ENCODE measurements at regions of chr9 and their contacts with region 1.

Region 1: GRCh38 chr9:19174127-19174912 is 47.0 kb upstream of the PLIN2 start:
- DNase-seq: no peak
- H3K4me3 ChIP-seq: no peak overlapping the region
- H3K27ac ChIP-seq: no peak overlapping the region
- H3K4me1 ChIP-seq: peaks cover 8 to 12% (median 10%) of the 10 kb centered on the region in 4 donors
- H3K27me3 ChIP-seq: no peaks in the 10 kb centered on the region
- CTCF ChIP-seq: peak; percentile 51 to 61 (median 56)
- EP300 ChIP-seq: no peak
- POLR2A ChIP-seq: no peak

Region 2: GRCh38 chr9:19048966-19049916 is 125.1 kb before region 1 on chr9 and contains the start of gene RRAGA:
- intact Hi-C with region 1: loop called (anchors 5 kb)
- DNase-seq: peak; percentile 98
- H3K4me3 ChIP-seq: peak within 1 kb of the TSS; percentile 76 to 95 (median 86)
- H3K27ac ChIP-seq: peak within 1 kb of the TSS; percentile 92 to 99 (median 96)
- H3K4me1 ChIP-seq: peaks cover 23 to 46% (median 41%) of the 10 kb centered on the region in 4 donors
- H3K27me3 ChIP-seq: no peaks in the 10 kb centered on the region
- CTCF ChIP-seq: peak; percentile 75 to 88 (median 83)
- EP300 ChIP-seq: no peak
- POLR2A ChIP-seq: peak; percentile 79
- total RNA-seq, gene RRAGA: 51.0 to 94.3 (median 70.0) TPM

Region 3: GRCh38 chr9:19379697-19380046 is 205.4 kb after region 1 on chr9:
- intact Hi-C with region 1: no loop called
- DNase-seq: no peak
- H3K4me3 ChIP-seq: peak overlapping the region; percentile 59 to 85 (median 76)
- H3K27ac ChIP-seq: peak overlapping the region; percentile 92 to 95 (median 94)
- H3K4me1 ChIP-seq: peaks cover 22 to 32% (median 31%) of the 10 kb centered on the region in 4 donors
- H3K27me3 ChIP-seq: no peaks in the 10 kb centered on the region
- CTCF ChIP-seq: no peak
- EP300 ChIP-seq: no peak
- POLR2A ChIP-seq: no peak

Measured in esophagus muscularis mucosa (tissue), 4 donors.